ENCODE measurements at regions of chr5 and their contacts with region 1.

Region 1: DNA sequence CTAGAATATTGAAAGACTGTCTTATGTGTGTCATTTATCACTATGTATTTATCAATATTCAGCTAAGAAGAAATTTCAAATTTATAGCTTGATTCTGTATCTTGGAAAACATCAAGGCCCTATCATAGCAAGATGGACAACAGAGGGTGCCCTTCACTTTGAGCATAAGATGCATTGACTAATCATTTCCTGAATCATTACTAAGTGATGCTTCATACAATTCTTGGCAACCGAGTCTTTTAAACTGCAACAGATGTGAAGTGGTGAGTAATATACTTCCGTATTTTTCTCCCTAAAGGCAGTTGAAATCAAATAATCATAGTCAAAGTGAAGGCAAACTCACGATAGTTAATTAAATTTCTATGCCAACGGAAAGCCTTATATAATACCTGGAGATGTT is 318.6 kb upstream of the RGMB start:
- DNase-seq: no peak
- H3K4me3 ChIP-seq: no peak overlapping the region
- H3K27ac ChIP-seq: peak overlapping the region in 1 of 4 donors; percentile 23
- H3K4me1 ChIP-seq: no peaks in the 10 kb centered on the region
- H3K27me3 ChIP-seq: no peaks in the 10 kb centered on the region
- CTCF ChIP-seq: no peak
- EP300 ChIP-seq: no peak
- POLR2A ChIP-seq: no peak

Region 2: DNA sequence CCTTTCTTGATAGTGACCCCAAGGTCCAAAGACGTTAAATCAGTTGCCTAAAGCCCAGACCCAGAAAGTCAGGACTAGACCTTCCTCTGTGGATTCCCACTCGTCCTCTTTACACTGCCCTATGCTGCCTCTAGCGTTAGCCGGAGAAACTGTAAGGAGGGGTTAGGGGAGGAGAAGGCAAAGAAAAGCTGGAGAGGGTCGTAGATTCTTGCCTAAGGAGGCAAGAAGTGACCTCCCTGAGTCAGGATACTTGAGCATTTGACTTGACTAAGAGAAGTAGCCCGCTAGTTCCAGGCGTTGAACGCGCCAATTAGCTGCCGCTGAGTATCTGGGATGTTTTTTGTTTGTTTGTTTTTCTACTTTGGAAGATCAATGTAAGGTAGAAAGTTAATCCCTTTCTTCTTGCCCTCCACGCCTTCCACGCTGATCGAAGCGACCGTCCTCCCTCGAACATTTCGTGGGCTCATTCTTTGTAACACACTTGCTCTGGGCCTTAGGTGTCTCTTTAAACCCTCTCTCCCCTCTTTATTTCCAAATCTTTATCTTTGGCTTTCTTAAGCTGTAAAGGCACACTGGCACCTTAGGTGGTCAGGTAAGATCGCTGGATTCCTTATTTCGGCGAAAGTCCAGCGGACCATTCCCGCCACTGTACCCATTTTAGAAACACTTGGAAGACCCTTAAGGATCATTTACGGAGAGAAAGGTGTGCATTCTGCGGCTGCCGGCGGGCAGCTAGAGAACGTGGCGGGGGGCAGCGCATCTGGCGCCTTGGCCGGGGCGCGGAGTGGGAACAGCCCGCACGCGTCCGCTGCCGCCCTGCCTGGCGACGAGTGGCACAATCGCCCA is 313.5 kb after region 1 on chr5:
- intact Hi-C with region 1: loop called (anchors 10 kb)
- DNase-seq: no peak
- H3K4me3 ChIP-seq: peak overlapping the region; percentile 54 to 63 (median 60)
- H3K27ac ChIP-seq: peak overlapping the region; percentile 79 to 97 (median 92)
- H3K4me1 ChIP-seq: peaks cover 0 to 32% (median 16%) of the 10 kb centered on the region in 4 donors
- H3K27me3 ChIP-seq: no peaks in the 10 kb centered on the region
- CTCF ChIP-seq: peak; percentile 66 to 85 (median 81)
- EP300 ChIP-seq: no peak
- POLR2A ChIP-seq: no peak

Measured in sigmoid colon (tissue), 7 donors.